ENCODE measurements at regions of chr3 and their contacts with region 1.

Region 1: GRCh38 chr3:71130471-71131374 is 452.8 kb downstream of the FOXP1 start:
- DNase-seq: peak; percentile 81
- H3K4me3 Mint-ChIP-seq: peak overlapping the region; percentile 93
- H3K27ac Mint-ChIP-seq: peak overlapping the region; percentile 94
- H3K4me1 Mint-ChIP-seq: peaks cover 68% of the 10 kb centered on the region
- H3K27me3 Mint-ChIP-seq: no peaks in the 10 kb centered on the region

Region 2: DNA sequence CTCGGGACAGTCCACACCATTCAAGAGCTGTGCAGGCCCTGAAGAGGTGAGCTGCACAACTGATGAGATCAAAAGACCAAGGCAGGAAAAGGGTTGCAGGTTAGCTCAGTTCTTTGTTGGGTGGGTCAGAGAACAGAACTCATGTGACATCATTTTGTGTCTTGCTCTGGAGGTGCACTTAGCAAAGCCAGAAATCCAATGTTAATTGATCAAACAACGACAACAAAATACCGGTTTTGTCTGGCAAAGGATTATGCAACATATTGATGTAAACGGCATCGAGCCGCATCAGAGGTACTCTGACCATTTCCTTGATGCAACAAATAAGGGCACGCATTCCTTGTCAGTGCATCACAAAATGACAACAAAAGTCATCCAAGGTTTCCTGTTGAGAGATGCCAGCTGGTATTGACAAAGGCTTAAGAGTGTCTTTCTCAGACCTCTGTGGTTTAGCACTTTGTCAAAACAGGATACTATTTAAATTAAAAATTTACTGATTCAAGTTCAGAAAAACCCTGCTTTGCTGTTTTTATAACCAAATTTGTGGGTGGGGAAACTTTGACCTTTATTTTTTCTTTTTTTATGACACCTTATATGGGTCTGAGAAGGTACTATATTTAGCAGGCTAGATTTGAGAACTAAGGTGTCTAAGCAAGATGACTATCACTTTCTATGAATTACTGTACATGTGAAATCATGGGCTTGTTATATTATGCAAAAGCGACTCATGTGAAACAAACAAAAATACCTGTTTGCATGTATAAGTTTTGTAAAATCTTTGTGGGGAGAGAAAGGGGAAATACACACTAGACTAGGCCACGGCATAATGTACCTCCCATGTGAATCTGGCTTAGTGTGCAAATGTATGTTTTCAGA is 43.3 kb before region 1 on chr3:
- CTCF ChIA-PET with region 1: interaction called, 4 read pairs
- POLR2A ChIA-PET with region 1: interaction called, 9 read pairs
- intact Hi-C with region 1: loop called (anchors 1 kb)
- DNase-seq: peak; percentile 62
- H3K4me3 Mint-ChIP-seq: peak overlapping the region; percentile 38
- H3K27ac Mint-ChIP-seq: peak overlapping the region; percentile 81
- H3K4me1 Mint-ChIP-seq: peaks cover 88% of the 10 kb centered on the region
- H3K27me3 Mint-ChIP-seq: no peaks in the 10 kb centered on the region

Region 3: GRCh38 chr3:71109241-71109976 is 21.3 kb before region 1 on chr3:
- CTCF ChIA-PET with region 1: no interaction called
- POLR2A ChIA-PET with region 1: no interaction called
- intact Hi-C with region 1: loop called (anchors 1 kb)
- DNase-seq: no peak
- H3K4me3 Mint-ChIP-seq: peak overlapping the region; percentile 38
- H3K27ac Mint-ChIP-seq: peak overlapping the region; percentile 73
- H3K4me1 Mint-ChIP-seq: peaks cover 84% of the 10 kb centered on the region
- H3K27me3 Mint-ChIP-seq: no peaks in the 10 kb centered on the region

Region 4: DNA sequence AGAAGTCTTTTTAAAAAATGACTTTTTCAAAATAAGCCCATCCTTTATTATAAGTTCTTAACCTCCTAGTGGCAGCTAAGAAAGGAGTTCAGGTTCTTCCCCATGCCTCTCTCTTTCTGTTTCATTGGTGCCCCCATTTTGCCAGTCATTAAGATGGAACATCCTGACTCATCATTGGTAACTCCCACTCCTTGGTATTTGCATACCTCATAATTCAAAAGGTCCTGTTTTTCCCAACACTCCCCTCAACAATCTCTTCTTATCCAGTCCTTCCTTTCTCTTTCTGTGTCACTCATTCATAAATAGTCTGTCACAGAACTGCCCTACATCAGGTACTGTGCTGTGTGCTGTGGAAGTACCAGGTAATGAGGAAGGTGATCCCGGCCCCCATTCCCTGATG is 58.8 kb after region 1 on chr3:
- CTCF ChIA-PET with region 1: no interaction called
- POLR2A ChIA-PET with region 1: no interaction called
- intact Hi-C with region 1: loop called (anchors 2 kb)
- DNase-seq: no peak
- H3K4me3 Mint-ChIP-seq: no peak overlapping the region
- H3K27ac Mint-ChIP-seq: peak overlapping the region; percentile 84
- H3K4me1 Mint-ChIP-seq: peaks cover 82% of the 10 kb centered on the region
- H3K27me3 Mint-ChIP-seq: no peaks in the 10 kb centered on the region

Region 5: DNA sequence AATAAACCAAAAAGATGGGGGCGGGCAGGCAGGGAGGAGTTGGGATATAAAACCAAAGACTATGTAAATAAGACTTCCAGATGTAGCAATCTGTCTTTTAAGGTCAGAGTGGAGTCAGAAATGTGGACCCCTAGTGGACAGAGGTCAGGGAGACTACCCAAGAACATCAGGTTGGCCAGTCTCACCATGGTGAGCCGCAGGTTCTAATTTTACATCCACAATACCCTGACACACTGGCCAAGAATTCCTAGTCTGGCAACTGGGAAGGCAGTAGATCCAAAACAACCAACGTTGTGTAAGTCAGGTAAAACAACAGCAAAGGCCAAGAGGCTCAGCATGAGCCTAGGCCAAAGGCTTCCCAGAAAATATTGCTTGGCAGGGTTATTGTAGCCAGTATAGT is 249.4 kb after region 1 on chr3:
- CTCF ChIA-PET with region 1: no interaction called
- POLR2A ChIA-PET with region 1: no interaction called
- intact Hi-C with region 1: loop called (anchors 5 kb)
- DNase-seq: no peak
- H3K4me3 Mint-ChIP-seq: no peak overlapping the region
- H3K27ac Mint-ChIP-seq: peak overlapping the region; percentile 85
- H3K4me1 Mint-ChIP-seq: peaks cover 82% of the 10 kb centered on the region
- H3K27me3 Mint-ChIP-seq: no peaks in the 10 kb centered on the region

Region 6: GRCh38 chr3:71495708-71496472 is 365.2 kb after region 1 on chr3:
- CTCF ChIA-PET with region 1: no interaction called
- POLR2A ChIA-PET with region 1: interaction called, 3 read pairs
- intact Hi-C with region 1: loop called (anchors 5 kb)
- DNase-seq: peak; percentile 62
- H3K4me3 Mint-ChIP-seq: peak overlapping the region; percentile 58
- H3K27ac Mint-ChIP-seq: peak overlapping the region; percentile 77
- H3K4me1 Mint-ChIP-seq: peaks cover 73% of the 10 kb centered on the region
- H3K27me3 Mint-ChIP-seq: no peaks in the 10 kb centered on the region

Region 7: GRCh38 chr3:71583566-71584449 is 453.1 kb after region 1 on chr3 and contains the start of gene FOXP1:
- CTCF ChIA-PET with region 1: interaction called, 3 read pairs
- POLR2A ChIA-PET with region 1: interaction called, 9 read pairs
- intact Hi-C with region 1: loop called (anchors 2 kb)
- DNase-seq: peak; percentile 75
- H3K4me3 Mint-ChIP-seq: peak within 1 kb of the TSS; percentile 88
- H3K27ac Mint-ChIP-seq: peak within 1 kb of the TSS; percentile 91
- H3K4me1 Mint-ChIP-seq: peaks cover 56% of the 10 kb centered on the region
- H3K27me3 Mint-ChIP-seq: peaks cover 1% of the 10 kb centered on the region
- total RNA-seq, gene FOXP1: 94.4 to 102 TPM